Naive thymus-derived CD4-positive, alpha-beta T cell (primary cell): ENCODE measurements at regions of chr16 and their contacts with region 1.

Region 1: GRCh38 chr16:53892155-53892554 is 188.2 kb downstream of the FTO start:
- DNase-seq: peak in 6 of 9 donors; percentile 20 to 60 (median 42)
- ATAC-seq: peak; percentile 55
- H3K4me3 ChIP-seq: no peak overlapping the region
- H3K4me3 Mint-ChIP-seq: peak overlapping the region in 1 of 10 donors; percentile 40
- H3K27ac ChIP-seq: no peak overlapping the region
- H3K27ac Mint-ChIP-seq: peak overlapping the region in 1 of 9 donors; percentile 75
- H3K4me1 ChIP-seq: no peaks in the 10 kb centered on the region
- H3K4me1 Mint-ChIP-seq: peaks cover 0 to 36% (median 5%) of the 10 kb centered on the region in 7 donors
- H3K27me3 ChIP-seq: no peaks in the 10 kb centered on the region
- H3K27me3 Mint-ChIP-seq: no peaks in the 10 kb centered on the region

Region 2: GRCh38 chr16:53549970-53550690 is 342.0 kb before region 1 on chr16:
- CTCF ChIA-PET with region 1: no interaction called
- POLR2A ChIA-PET with region 1: no interaction called
- intact Hi-C with region 1: loop called (anchors 2 to 10 kb)
- DNase-seq: peak in 8 of 9 donors; percentile 33 to 66 (median 52)
- ATAC-seq: peak; percentile 71
- H3K4me3 ChIP-seq: no peak overlapping the region
- H3K4me3 Mint-ChIP-seq: peak overlapping the region in 1 of 10 donors; percentile 7
- H3K27ac ChIP-seq: no peak overlapping the region
- H3K27ac Mint-ChIP-seq: no peak overlapping the region
- H3K4me1 ChIP-seq: peaks cover 8 to 15% of the 10 kb centered on the region in 2 donors
- H3K4me1 Mint-ChIP-seq: peaks cover 11 to 39% (median 27%) of the 10 kb centered on the region in 7 donors
- H3K27me3 ChIP-seq: peaks cover 0 to 8% of the 10 kb centered on the region in 2 donors
- H3K27me3 Mint-ChIP-seq: peaks cover 17 to 44% (median 19%) of the 10 kb centered on the region in 5 donors

Region 3: DNA sequence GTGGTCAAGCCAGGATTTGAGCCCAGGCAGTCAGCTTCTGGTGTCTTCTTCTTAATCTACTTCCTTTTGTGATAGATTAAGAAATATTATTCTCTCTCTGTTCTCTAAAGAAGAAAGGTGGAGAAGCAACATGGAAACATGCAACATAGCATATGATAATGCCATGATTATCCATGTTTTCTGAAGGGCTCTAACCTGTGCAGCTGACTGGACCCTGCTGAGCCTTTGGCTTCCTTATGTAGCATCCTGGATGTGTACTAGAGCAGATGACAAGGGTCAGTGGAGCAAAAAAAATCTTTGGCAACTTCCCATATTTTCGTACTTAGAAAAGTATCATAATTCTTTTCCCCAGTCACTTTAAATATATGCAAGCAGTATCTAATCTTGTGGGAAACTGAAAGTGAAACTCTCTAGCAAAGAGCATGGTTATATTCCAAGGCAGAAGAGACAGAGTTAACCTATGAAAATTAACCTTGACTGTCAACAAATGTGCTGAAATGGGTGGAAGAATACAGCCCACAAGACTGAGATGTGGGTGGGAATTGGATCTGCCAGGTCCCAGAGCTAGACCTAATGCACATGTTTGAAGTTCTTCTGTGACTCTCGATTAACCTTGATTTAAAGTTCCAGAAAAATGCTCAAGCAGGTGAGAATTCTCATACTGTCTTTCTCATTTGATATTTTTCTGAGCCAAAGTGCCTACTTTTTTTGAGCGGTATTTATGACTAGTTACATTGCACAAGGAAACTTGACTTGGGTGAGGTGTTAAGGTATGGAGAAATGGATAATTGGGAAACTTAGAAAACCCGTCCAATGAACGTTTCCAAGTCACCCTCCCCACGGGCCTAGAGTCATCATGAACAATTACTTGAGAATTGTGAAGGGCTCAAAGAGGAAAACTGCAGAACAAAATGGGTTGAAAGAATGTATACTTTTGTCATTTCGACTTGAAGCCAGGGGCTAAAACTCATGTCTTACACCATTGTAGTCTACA is 60.4 kb after region 1 on chr16:
- CTCF ChIA-PET with region 1: no interaction called
- POLR2A ChIA-PET with region 1: no interaction called
- intact Hi-C with region 1: loop called in 1 of 2 experiments (anchors 5 kb)
- DNase-seq: peak in 4 of 9 donors; percentile 4 to 19 (median 16)
- ATAC-seq: peak; percentile 55
- H3K4me3 ChIP-seq: peak overlapping the region; percentile 51
- H3K4me3 Mint-ChIP-seq: peak overlapping the region; percentile 36 to 88 (median 78)
- H3K27ac ChIP-seq: peak overlapping the region; percentile 15
- H3K27ac Mint-ChIP-seq: peak overlapping the region; percentile 48 to 79 (median 71)
- H3K4me1 ChIP-seq: peaks cover 4 to 6% of the 10 kb centered on the region in 2 donors
- H3K4me1 Mint-ChIP-seq: peaks cover 24 to 53% (median 42%) of the 10 kb centered on the region in 7 donors
- H3K27me3 ChIP-seq: no peaks in the 10 kb centered on the region
- H3K27me3 Mint-ChIP-seq: no peaks in the 10 kb centered on the region

Region 4: GRCh38 chr16:54171626-54172525 is 279.7 kb after region 1 on chr16:
- CTCF ChIA-PET with region 1: no interaction called
- POLR2A ChIA-PET with region 1: no interaction called
- intact Hi-C with region 1: loop called in 1 of 2 experiments (anchors 10 kb)
- DNase-seq: no peak
- ATAC-seq: no peak
- H3K4me3 ChIP-seq: no peak overlapping the region
- H3K4me3 Mint-ChIP-seq: no peak overlapping the region
- H3K27ac ChIP-seq: no peak overlapping the region
- H3K27ac Mint-ChIP-seq: no peak overlapping the region
- H3K4me1 ChIP-seq: no peaks in the 10 kb centered on the region
- H3K4me1 Mint-ChIP-seq: peaks cover 0 to 4% (median 0%) of the 10 kb centered on the region in 7 donors
- H3K27me3 ChIP-seq: no peaks in the 10 kb centered on the region
- H3K27me3 Mint-ChIP-seq: peaks cover 15 to 46% (median 23%) of the 10 kb centered on the region in 5 donors

Region 5: DNA sequence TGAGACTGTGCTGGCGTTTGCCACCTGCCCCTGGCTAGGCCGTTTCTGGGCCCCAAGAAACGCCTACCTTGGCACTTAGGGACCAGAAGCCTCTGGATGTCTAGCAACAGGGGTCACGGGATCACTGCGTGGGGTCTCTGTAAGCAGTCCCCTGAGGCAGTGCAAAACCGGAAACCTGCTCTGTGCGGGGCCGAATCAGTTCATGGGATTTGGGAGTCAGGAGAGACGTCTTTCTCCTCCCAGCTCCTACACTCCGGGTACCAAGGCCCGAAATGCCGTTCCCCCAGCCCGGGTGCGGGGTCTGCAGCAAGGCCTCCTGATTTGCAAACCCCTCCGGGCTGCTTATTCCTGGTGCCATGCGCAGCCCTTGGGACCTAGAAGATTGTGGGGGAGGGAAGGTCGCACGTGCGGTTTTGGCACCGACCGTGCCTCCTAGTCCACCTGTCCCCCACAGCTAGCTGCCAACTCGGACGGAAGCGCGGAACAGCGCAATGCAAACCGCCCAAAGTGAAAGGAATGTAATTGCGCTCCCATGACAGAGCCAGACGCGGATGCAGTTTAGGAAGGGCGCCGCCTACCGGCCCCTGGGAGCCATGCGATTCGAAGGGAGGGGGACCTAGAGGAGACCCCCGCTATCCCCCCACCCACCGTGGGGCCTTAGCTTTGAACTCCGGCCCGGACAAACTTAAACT is 1045.0 kb after region 1 on chr16:
- CTCF ChIA-PET with region 1: no interaction called
- POLR2A ChIA-PET with region 1: no interaction called
- intact Hi-C with region 1: loop called in 1 of 2 experiments (anchors 2 kb)
- DNase-seq: no peak
- ATAC-seq: no peak
- H3K4me3 ChIP-seq: no peak overlapping the region
- H3K4me3 Mint-ChIP-seq: peak overlapping the region in 8 of 10 donors; percentile 44 to 63 (median 55)
- H3K27ac ChIP-seq: no peak overlapping the region
- H3K27ac Mint-ChIP-seq: peak overlapping the region in 1 of 9 donors; percentile 68
- H3K4me1 ChIP-seq: no peaks in the 10 kb centered on the region
- H3K4me1 Mint-ChIP-seq: peaks cover 7 to 35% (median 20%) of the 10 kb centered on the region in 7 donors
- H3K27me3 ChIP-seq: peaks cover 10 to 35% of the 10 kb centered on the region in 2 donors
- H3K27me3 Mint-ChIP-seq: peaks cover 79 to 91% (median 86%) of the 10 kb centered on the region in 5 donors

Region 6: GRCh38 chr16:55842369-55843104 is 1950.4 kb after region 1 on chr16:
- CTCF ChIA-PET with region 1: no interaction called
- POLR2A ChIA-PET with region 1: no interaction called
- intact Hi-C with region 1: loop called in 1 of 2 experiments (anchors 5 kb)
- DNase-seq: peak in 5 of 9 donors; percentile 3 to 17 (median 9)
- ATAC-seq: peak; percentile 62
- H3K4me3 ChIP-seq: no peak overlapping the region
- H3K4me3 Mint-ChIP-seq: no peak overlapping the region
- H3K27ac ChIP-seq: no peak overlapping the region
- H3K27ac Mint-ChIP-seq: no peak overlapping the region
- H3K4me1 ChIP-seq: no peaks in the 10 kb centered on the region
- H3K4me1 Mint-ChIP-seq: peaks cover 0 to 1% (median 0%) of the 10 kb centered on the region in 7 donors
- H3K27me3 ChIP-seq: no peaks in the 10 kb centered on the region
- H3K27me3 Mint-ChIP-seq: peaks cover 11 to 46% (median 25%) of the 10 kb centered on the region in 5 donors